MCF 10A (cell line): ENCODE measurements at regions of chr1 and their contacts with region 1.

Region 1: GRCh38 chr1:160376525-160377131 is 9.8 kb downstream of the NHLH1 start:
- DNase-seq: peak; percentile 81
- H3K4me3 Mint-ChIP-seq: no peak overlapping the region
- H3K27ac Mint-ChIP-seq: no peak overlapping the region
- H3K4me1 Mint-ChIP-seq: peaks cover 13% of the 10 kb centered on the region
- H3K27me3 Mint-ChIP-seq: peaks cover 19% of the 10 kb centered on the region
- CTCF ChIP-seq: peak; percentile 98

Region 2: DNA sequence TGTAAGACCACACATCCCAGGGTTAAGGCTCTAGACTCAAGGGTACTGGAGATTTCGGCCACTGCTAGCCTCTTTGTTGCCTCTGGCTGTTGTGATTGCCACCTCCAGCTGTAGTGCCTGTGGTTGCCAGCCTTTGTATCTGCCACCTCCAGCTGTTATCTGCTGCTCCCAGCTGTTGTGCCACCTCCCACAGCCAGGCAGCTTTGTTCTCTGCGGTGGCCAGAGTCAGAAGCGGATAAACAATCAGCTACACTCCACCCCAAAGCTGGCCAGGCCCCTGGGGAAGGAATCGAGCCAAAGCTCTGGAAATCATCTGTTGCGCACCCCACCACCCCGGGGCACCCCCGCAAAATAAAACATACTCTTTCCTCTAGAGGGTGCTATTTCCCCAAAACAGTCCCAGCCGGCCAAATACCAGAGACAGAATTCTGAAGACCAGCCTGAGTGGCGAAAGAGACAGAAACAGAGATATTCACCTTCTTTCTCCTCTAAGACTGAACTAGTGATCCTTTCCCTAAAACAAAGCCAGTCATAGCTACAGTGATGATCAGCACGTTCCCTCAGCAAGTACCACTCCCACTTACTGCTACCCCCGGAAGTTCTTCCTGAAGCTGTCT is 330.0 kb before region 1 on chr1:
- CTCF ChIA-PET with region 1: interaction called, 9 read pairs
- POLR2A ChIA-PET with region 1: no interaction called
- intact Hi-C with region 1: loop called (anchors 10 kb)
- DNase-seq: peak; percentile 73
- H3K4me3 Mint-ChIP-seq: no peak overlapping the region
- H3K27ac Mint-ChIP-seq: no peak overlapping the region
- H3K4me1 Mint-ChIP-seq: peaks cover 16% of the 10 kb centered on the region
- H3K27me3 Mint-ChIP-seq: peaks cover 63% of the 10 kb centered on the region
- CTCF ChIP-seq: peak; percentile 83

Region 3: GRCh38 chr1:160284782-160285344 is 91.8 kb before region 1 on chr1 and contains the start of gene PEX19:
- CTCF ChIA-PET with region 1: no interaction called
- POLR2A ChIA-PET with region 1: no interaction called
- intact Hi-C with region 1: no loop called
- DNase-seq: peak; percentile 97
- H3K4me3 Mint-ChIP-seq: peak within 1 kb of the TSS; percentile 100
- H3K27ac Mint-ChIP-seq: peak within 1 kb of the TSS; percentile 99
- H3K4me1 Mint-ChIP-seq: peaks cover 19% of the 10 kb centered on the region
- H3K27me3 Mint-ChIP-seq: no peaks in the 10 kb centered on the region
- CTCF ChIP-seq: no peak
- total RNA-seq, gene PEX19: 61.2 and 73.2 TPM in 2 replicates

Region 4: DNA sequence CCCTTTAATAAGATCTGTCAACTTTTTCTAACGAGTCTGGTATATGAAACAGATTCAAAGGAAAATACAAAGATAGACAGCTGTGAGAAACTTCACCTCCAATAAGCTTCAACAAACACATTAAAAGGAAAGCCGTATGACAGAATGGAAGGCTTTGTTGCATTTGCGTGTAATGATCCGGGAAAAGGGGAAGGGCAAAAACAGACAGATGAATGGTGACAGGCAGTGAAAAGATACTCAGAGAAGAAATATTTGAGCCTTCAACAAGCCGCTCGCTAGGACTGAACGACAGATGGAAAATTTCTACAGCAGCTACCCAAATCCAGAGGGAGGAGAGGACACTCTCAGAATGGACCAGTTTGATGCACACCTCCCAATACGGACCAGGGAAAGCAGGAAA is 48.4 kb before region 1 on chr1:
- CTCF ChIA-PET with region 1: interaction called, 10 read pairs
- POLR2A ChIA-PET with region 1: no interaction called
- intact Hi-C with region 1: no loop called
- DNase-seq: no peak
- H3K4me3 Mint-ChIP-seq: no peak overlapping the region
- H3K27ac Mint-ChIP-seq: no peak overlapping the region
- H3K4me1 Mint-ChIP-seq: no peaks in the 10 kb centered on the region
- H3K27me3 Mint-ChIP-seq: no peaks in the 10 kb centered on the region
- CTCF ChIP-seq: no peak

Region 5: DNA sequence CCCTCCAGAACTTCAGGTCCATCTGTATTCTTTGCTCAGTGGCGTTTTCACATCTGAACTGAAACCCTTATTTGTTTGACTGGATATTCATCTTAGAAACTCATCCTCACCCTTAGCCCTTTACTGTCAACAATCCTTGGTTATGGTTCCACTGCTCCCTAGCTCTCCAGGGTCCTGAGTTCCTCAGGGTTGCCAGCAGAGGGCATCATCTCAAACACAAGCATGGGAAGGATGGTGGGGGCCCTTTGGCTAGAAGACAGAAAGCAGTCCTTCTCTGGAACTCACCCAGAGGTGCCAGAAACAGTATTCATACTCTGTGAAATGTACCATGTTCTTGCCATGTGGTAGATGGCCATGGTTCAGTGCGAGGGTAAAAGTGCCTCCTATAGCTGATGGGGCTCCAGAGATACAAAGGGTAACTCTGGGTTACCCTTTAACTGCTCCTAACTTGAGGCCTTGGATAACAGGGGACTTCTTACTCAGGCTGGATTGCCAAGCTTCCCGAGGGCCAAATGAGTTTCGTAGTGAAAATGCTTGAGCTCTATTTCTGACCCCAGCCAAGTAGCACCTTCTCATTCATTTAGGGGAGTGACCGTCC is 22.1 kb before region 1 on chr1:
- CTCF ChIA-PET with region 1: interaction called, 181 read pairs
- POLR2A ChIA-PET with region 1: no interaction called
- intact Hi-C with region 1: no loop called
- DNase-seq: peak; percentile 39
- H3K4me3 Mint-ChIP-seq: no peak overlapping the region
- H3K27ac Mint-ChIP-seq: no peak overlapping the region
- H3K4me1 Mint-ChIP-seq: no peaks in the 10 kb centered on the region
- H3K27me3 Mint-ChIP-seq: no peaks in the 10 kb centered on the region
- CTCF ChIP-seq: peak; percentile 46

Region 6: GRCh38 chr1:160398823-160399222 is 22.2 kb after region 1 on chr1:
- CTCF ChIA-PET with region 1: interaction called, 25 read pairs
- POLR2A ChIA-PET with region 1: interaction called, 3 read pairs
- intact Hi-C with region 1: no loop called
- DNase-seq: peak; percentile 36
- H3K4me3 Mint-ChIP-seq: no peak overlapping the region
- H3K27ac Mint-ChIP-seq: no peak overlapping the region
- H3K4me1 Mint-ChIP-seq: peaks cover 7% of the 10 kb centered on the region
- H3K27me3 Mint-ChIP-seq: peaks cover 16% of the 10 kb centered on the region
- CTCF ChIP-seq: no peak

Region 7: DNA sequence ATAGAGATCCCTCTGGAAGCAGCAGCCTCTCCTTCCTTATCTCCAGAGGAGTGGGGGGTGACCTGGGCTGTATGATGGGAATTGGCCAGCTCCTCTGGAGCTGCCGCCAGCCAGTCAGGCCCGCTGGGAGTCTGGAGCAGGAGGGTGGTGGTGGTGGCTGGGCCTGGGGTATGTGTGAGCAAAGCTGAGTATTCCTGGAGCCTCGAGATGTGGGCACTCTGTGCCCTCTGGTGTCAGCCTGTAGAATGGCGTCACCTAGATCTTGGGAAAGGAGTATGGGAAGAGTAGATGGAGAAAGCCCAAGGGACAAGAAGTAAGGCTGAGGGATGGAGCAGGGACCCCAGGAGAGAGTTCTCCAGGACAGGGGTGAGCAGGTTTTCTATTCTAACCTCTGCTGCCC is 39.7 kb after region 1 on chr1:
- CTCF ChIA-PET with region 1: interaction called, 116 read pairs
- POLR2A ChIA-PET with region 1: interaction called, 7 read pairs
- intact Hi-C with region 1: no loop called
- DNase-seq: peak; percentile 77
- H3K4me3 Mint-ChIP-seq: no peak overlapping the region
- H3K27ac Mint-ChIP-seq: no peak overlapping the region
- H3K4me1 Mint-ChIP-seq: peaks cover 12% of the 10 kb centered on the region
- H3K27me3 Mint-ChIP-seq: peaks cover 11% of the 10 kb centered on the region
- CTCF ChIP-seq: peak; percentile 83

Region 8: DNA sequence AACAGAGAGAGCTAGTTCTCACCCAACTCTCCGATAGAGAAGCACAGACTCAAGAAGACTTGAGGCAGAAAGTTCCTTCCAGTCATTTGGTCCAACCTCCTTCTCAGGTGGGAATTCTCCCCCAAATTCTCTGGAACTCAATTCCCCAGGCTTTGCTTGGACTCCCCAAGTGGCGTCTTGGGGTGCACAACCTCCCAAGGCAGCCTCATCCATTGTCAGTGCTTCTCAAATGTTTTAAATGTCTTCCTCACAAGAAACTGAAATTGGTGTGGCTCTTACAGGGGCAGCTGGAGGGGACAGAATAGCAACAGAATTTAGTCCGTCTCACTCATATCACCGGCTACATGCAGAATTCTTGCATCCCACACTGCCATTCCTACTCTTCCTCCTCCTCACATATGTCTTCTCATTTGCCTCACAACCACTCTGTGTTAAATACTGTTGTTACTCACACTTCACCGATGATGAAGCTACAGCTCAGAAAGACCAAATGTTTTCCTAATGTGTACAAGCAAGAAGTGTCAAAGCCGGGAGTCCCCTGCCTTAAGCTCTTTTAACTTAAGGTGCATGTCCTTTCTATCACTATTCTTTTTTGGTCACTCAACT is 236.1 kb after region 1 on chr1:
- CTCF ChIA-PET with region 1: interaction called, 10 read pairs
- POLR2A ChIA-PET with region 1: no interaction called
- intact Hi-C with region 1: no loop called
- DNase-seq: no peak
- H3K4me3 Mint-ChIP-seq: no peak overlapping the region
- H3K27ac Mint-ChIP-seq: no peak overlapping the region
- H3K4me1 Mint-ChIP-seq: no peaks in the 10 kb centered on the region
- H3K27me3 Mint-ChIP-seq: peaks cover 62% of the 10 kb centered on the region
- CTCF ChIP-seq: no peak

Region 9: GRCh38 chr1:160711602-160712311 is 335.1 kb after region 1 on chr1 and contains the start of gene CD48:
- CTCF ChIA-PET with region 1: no interaction called
- POLR2A ChIA-PET with region 1: no interaction called
- intact Hi-C with region 1: no loop called
- DNase-seq: no peak
- H3K4me3 Mint-ChIP-seq: no peak within 1 kb of the TSS
- H3K27ac Mint-ChIP-seq: no peak within 1 kb of the TSS
- H3K4me1 Mint-ChIP-seq: no peaks in the 10 kb centered on the region
- H3K27me3 Mint-ChIP-seq: peaks cover 10% of the 10 kb centered on the region
- CTCF ChIP-seq: no peak
- total RNA-seq, gene CD48: not detected in 2 replicates